IMR-90 (cell line): ENCODE measurements at regions of chr1 and their contacts with region 1.

Region 1: DNA sequence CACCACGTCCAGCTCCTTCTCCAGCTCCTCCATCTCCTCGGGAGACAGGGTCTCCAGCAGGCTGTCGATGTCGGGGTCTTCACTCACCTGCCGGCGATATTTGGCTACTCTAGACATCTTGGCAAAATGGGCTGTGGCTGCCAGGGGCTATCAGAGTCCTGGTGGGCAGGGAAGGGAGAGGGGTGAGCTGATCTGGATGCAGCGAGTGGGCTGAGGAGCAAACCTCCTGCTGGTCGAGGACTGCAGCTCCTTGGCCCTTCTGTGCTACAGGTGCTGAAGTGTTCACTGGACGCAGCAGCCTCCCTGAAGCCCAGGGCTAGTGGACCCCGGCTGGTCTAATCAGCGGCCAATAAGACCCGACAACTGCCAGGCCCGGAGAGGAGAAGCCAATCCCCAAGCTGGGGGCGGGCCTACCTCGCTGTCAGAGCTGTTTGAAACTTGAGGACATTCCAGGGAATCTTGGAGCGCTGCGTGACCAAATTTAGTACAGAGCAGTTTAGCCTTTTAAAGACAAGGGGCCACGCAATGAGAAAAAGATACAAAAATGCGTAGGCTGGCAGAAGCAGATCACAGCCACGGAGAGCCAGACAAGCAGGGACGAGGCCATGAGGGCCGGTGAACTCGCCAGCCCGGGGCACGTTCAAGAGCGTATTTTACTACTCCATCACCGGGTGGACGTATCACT is at the start of gene LMOD1:
- DNase-seq: peak; percentile 98
- ATAC-seq: peak; percentile 94
- H3K4me3 ChIP-seq: peak within 1 kb of the TSS; percentile 72
- H3K27ac ChIP-seq: peak within 1 kb of the TSS; percentile 91
- H3K4me1 ChIP-seq: peaks cover 26% of the 10 kb centered on the region
- H3K27me3 ChIP-seq: no peaks in the 10 kb centered on the region
- CTCF ChIP-seq: no peak; the same call in 1 of the 2 replicates
- POLR2A ChIP-seq: peak; percentile 88
- RAD21 ChIP-seq: no peak
- total RNA-seq, gene LMOD1: 44.4 and 53.2 TPM in 2 replicates

Region 2: DNA sequence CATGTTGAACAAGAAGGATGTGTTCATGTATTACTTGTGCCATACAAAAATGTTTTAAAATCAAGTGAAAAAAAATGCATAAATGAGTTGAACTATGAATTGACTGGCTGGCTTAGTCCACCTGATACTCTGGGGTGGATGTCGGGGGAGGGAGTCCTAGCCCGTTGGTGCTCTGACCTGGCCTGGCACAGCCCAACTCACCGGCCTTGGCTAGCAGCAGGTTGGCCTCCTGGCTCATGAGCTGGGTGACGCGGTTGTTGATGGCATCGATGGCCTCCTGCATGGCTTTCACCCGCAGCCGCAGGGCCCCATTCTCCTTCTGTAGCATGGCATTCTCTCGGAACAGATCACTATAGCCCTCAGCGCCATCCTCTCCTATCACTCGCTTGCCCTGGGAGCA is 944.4 kb before region 1 on chr1:
- CTCF ChIA-PET with region 1: no interaction called
- POLR2A ChIA-PET with region 1: no interaction called
- dilution Hi-C with region 1: no loop called
- in situ Hi-C with region 1: no loop called
- intact Hi-C with region 1: no loop called
- DNase-seq: no peak
- ATAC-seq: no peak
- H3K4me3 ChIP-seq: no peak overlapping the region
- H3K27ac ChIP-seq: no peak overlapping the region
- H3K4me1 ChIP-seq: no peaks in the 10 kb centered on the region
- H3K27me3 ChIP-seq: peaks cover 8% of the 10 kb centered on the region; the same call in 1 of the 2 replicates
- CTCF ChIP-seq: no peak
- POLR2A ChIP-seq: no peak
- RAD21 ChIP-seq: no peak

Region 3: DNA sequence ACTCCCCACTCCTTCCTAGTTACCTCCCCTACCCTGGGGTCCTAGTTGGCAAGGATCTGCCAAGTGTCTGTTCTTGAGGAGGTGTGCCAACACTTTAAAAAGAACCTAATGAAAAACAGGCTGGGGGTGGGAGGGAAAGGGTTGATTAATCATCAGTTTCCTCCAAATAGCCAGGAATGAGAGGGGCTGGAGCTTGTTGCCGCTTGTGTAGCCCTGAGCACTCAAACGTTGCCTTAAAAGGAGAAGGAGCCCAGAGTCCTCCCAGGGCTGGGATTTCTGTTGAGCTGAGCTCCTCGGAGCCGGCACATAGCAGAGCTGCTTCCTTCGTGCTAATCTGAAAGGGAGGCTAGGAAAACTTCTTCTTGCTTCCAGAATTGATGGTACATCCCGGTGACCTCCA is 41.8 kb before region 1 on chr1:
- CTCF ChIA-PET with region 1: interaction called, 4 read pairs
- POLR2A ChIA-PET with region 1: interaction called, 24 read pairs
- dilution Hi-C with region 1: no loop called
- in situ Hi-C with region 1: no loop called
- intact Hi-C with region 1: no loop called
- DNase-seq: peak; percentile 94
- ATAC-seq: peak; percentile 92
- H3K4me3 ChIP-seq: no peak overlapping the region
- H3K27ac ChIP-seq: peak overlapping the region; percentile 97
- H3K4me1 ChIP-seq: peaks cover 31% of the 10 kb centered on the region
- H3K27me3 ChIP-seq: no peaks in the 10 kb centered on the region
- CTCF ChIP-seq: no peak
- POLR2A ChIP-seq: peak; percentile 62; the same call in 1 of the 2 replicates
- RAD21 ChIP-seq: no peak

Region 4: GRCh38 chr1:201916649-201917249 is 29.6 kb before region 1 on chr1:
- CTCF ChIA-PET with region 1: interaction called, 6 read pairs
- POLR2A ChIA-PET with region 1: interaction called, 5 read pairs
- dilution Hi-C with region 1: no loop called
- in situ Hi-C with region 1: no loop called
- intact Hi-C with region 1: loop called (anchors 2 kb)
- DNase-seq: peak; percentile 94
- ATAC-seq: peak; percentile 73
- H3K4me3 ChIP-seq: no peak overlapping the region
- H3K27ac ChIP-seq: peak overlapping the region; percentile 87
- H3K4me1 ChIP-seq: peaks cover 43% of the 10 kb centered on the region
- H3K27me3 ChIP-seq: no peaks in the 10 kb centered on the region
- CTCF ChIP-seq: no peak
- POLR2A ChIP-seq: no peak
- RAD21 ChIP-seq: no peak; the same call in 1 of the 2 replicates